K562 (cell line): ENCODE measurements at regions of chr3 and their contacts with region 1.

Region 1: DNA sequence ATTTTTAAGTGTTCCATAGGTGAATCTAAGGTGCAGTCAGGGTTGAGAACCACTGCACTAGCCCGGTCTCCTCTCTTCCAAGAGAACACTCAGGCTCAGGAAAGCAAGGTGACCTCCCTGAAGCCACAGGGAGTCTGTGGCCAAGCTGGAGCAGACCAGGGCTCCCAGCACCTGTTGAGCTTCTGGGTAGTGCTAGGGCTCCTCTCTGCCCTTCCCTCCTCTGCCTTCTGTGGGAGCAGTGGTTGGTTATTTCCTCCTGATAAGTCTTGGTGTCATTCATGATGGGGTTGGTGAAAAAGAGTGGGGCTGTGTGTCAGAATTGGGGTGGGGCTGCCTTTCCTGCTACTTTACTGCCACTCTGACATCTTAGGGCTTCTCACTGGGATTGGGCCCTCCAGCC is 163.1 kb upstream of the UMPS start:
- DNase-seq: no peak
- ATAC-seq: no peak
- H3K4me3 ChIP-seq: no peak overlapping the region
- H3K27ac ChIP-seq: no peak overlapping the region
- H3K4me1 ChIP-seq: peaks cover 0 to 5% of the 10 kb centered on the region in 2 experiments; a peak in 3 of 5 replicates
- H3K27me3 ChIP-seq: peaks cover 0 to 4% of the 10 kb centered on the region in 2 experiments; a peak in 1 of 5 replicates
- CTCF ChIP-seq: no peak
- EP300 ChIP-seq: no peak
- POLR2A ChIP-seq: no peak
- RAD21 ChIP-seq: no peak

Region 2: DNA sequence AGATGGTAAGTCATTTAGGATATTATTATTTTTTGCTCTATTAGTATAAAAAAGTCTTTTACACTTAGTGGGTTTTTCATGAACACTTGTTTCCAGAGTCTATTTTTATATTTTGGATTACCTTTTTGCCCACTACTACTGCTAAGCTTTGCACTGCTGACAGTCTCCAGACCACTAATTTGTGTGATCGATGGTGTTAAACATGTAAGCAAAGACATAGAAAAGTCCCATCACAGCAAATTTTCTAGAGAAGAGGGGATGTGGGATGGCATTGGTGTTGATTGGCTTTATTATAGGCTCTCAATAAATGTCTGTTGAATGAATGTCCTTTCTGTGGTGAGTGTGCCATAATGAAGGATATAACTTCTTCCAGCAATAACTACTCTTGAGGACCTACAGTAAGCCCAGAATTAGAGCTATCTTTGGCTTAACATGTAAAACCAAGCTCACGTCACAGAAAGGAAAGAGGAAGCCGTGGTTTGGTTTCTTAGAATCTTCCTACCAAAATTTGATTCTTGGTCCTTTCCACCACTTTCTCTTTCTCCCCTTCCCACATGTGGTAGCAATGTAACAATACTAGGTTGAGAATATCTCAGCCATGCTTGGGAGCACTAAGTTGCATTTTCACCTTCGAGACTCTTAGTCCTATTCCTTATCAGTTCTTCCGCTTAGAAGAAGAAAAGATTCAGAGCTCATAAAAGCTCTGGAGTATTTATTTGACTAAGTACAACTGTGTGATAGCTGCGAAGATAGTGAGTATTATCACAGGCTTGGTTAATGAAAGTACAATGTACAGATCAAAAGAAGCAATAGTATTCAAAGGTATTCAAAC is 72.4 kb after region 1 on chr3:
- CTCF ChIA-PET with region 1: interaction called, 6 read pairs
- POLR2A ChIA-PET with region 1: no interaction called
- in situ Hi-C with region 1: no loop called
- intact Hi-C with region 1: loop called (anchors 2 kb)
- DNase-seq: no peak
- ATAC-seq: no peak
- H3K4me3 ChIP-seq: no peak overlapping the region
- H3K27ac ChIP-seq: peak overlapping the region; percentile 23; the same call in 1 of the 3 replicates
- H3K4me1 ChIP-seq: peaks cover 0 to 34% of the 10 kb centered on the region in 2 experiments; a peak in 3 of 5 replicates
- H3K27me3 ChIP-seq: no peaks in the 10 kb centered on the region
- CTCF ChIP-seq: no peak
- EP300 ChIP-seq: no peak
- POLR2A ChIP-seq: no peak
- RAD21 ChIP-seq: no peak

Region 3: GRCh38 chr3:125916376-125916978 is 1349.3 kb after region 1 on chr3:
- CTCF ChIA-PET with region 1: no interaction called
- POLR2A ChIA-PET with region 1: no interaction called
- in situ Hi-C with region 1: no loop called
- intact Hi-C with region 1: no loop called
- DNase-seq: peak; percentile 76 to 92 (median 82)
- ATAC-seq: peak; percentile 99
- H3K4me3 ChIP-seq: peak overlapping the region; percentile 60
- H3K27ac ChIP-seq: peak overlapping the region; percentile 66
- H3K4me1 ChIP-seq: peaks cover 0 to 7% of the 10 kb centered on the region in 2 experiments; a peak in 2 of 5 replicates
- H3K27me3 ChIP-seq: no peaks in the 10 kb centered on the region
- CTCF ChIP-seq: peak in 2 of 3 experiments; percentile 53 to 57; a peak in 4 of 6 replicates
- EP300 ChIP-seq: no peak
- POLR2A ChIP-seq: peak; percentile 43; the same call in 1 of the 2 replicates
- RAD21 ChIP-seq: peak in 1 of 2 experiments; percentile 25; a peak in 2 of 4 replicates